ENCODE measurements at regions of chr12 and their contacts with region 1.

Region 1: GRCh38 chr12:43501703-43502102 is 50.3 kb downstream of the ADAMTS20 start:
- DNase-seq: no peak
- H3K4me3 ChIP-seq: no peak overlapping the region
- H3K27ac ChIP-seq: no peak overlapping the region
- H3K4me1 ChIP-seq: no peaks in the 10 kb centered on the region
- H3K27me3 ChIP-seq: no peaks in the 10 kb centered on the region
- CTCF ChIP-seq: peak; percentile 69

Region 2: DNA sequence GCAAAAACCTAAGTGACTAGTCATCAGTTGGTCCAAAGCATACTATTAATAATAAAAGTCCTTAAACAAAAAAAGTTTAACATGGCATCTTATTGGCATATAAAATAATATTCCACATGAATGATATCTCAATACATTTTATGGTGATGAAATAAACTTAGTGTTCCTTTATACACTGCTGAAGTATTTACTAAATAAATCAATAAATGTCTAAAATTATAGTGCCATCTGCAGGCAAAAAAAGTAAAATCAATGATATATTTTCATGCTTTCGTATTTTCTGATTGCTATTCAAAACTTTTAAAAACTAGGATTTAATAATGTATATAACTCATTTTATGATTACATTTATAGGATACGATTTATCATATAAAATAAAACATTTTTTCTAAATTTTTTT is 226.4 kb after region 1 on chr12:
- CTCF ChIA-PET with region 1: no interaction called
- POLR2A ChIA-PET with region 1: no interaction called
- intact Hi-C with region 1: loop called (anchors 2 kb)
- DNase-seq: no peak
- H3K4me3 ChIP-seq: no peak overlapping the region
- H3K27ac ChIP-seq: no peak overlapping the region
- H3K4me1 ChIP-seq: no peaks in the 10 kb centered on the region
- H3K27me3 ChIP-seq: no peaks in the 10 kb centered on the region
- CTCF ChIP-seq: peak; percentile 63

Measured in PC-9 (cell line).